ENCODE measurements at regions of chr17 and their contacts with region 1.

Region 1: DNA sequence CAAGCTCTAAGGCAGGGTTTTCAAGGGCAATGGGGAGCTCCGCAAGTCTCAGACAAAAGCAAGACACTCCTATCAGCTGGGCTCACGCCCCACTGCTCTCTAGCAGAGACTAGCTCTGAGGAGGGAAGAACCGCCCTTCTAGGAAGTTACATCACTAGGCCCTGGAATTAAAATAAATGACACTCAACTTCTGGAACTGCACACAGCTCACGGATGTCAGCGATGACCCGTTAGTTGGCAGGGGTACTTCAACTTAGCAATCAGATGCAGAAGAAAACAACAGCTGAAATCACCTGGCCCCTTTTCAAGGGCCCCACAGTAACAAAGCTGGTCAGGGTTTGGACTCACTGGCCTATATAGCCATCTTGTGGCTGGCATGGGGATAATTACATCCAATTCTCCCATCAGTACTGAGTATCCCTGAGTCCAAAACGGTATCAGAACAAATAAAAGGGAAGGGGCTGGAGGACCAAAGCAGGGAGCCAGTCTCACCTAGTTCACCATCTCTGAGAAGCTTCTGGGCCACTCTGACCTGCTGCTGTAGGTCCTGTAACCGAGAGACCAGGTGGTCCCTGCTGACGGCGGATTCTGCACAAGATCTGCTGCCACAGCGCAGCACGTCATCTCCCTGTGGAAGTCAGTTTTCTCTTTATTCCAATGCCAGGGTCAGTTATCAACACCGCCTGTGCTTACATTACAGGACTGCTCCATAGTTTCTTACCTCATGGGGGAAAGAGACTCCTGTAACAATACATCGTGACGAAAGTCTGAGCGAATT is 22.2 kb downstream of the SERPINF1 start:
- DNase-seq: no peak
- H3K4me3 Mint-ChIP-seq: no peak overlapping the region
- H3K27ac Mint-ChIP-seq: no peak overlapping the region
- H3K4me1 Mint-ChIP-seq: peaks cover 8% of the 10 kb centered on the region
- H3K27me3 Mint-ChIP-seq: no peaks in the 10 kb centered on the region
- CTCF ChIP-seq: no peak

Region 2: GRCh38 chr17:1648963-1649843 is 134.8 kb before region 1 on chr17:
- CTCF ChIA-PET with region 1: no interaction called
- intact Hi-C with region 1: no loop called
- DNase-seq: peak; percentile 88
- H3K4me3 Mint-ChIP-seq: peak overlapping the region; percentile 57
- H3K27ac Mint-ChIP-seq: no peak overlapping the region
- H3K4me1 Mint-ChIP-seq: no peaks in the 10 kb centered on the region
- H3K27me3 Mint-ChIP-seq: no peaks in the 10 kb centered on the region
- CTCF ChIP-seq: no peak

Region 3: DNA sequence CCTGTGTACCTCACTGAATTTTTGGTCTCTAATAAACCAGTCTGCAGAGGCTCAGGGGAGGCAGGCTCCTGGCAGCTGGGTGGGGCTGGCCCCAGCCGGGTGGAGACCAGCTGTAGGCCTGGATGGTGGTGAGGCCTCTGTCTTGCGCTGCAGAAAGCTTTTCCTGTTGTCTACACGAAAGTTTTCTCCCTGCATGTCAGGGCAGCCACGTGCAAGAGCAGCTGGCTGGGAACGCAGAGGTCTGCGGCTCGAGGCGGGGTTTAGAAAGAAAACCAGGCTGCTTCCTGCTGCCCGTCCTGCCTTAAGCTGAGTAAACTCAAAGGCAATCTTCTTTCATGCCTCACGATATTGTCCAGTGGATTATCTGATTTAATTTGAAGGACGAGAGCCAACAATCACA is 19.7 kb before region 1 on chr17:
- CTCF ChIA-PET with region 1: interaction called, 12 read pairs
- intact Hi-C with region 1: no loop called
- DNase-seq: no peak
- H3K4me3 Mint-ChIP-seq: no peak overlapping the region
- H3K27ac Mint-ChIP-seq: no peak overlapping the region
- H3K4me1 Mint-ChIP-seq: no peaks in the 10 kb centered on the region
- H3K27me3 Mint-ChIP-seq: no peaks in the 10 kb centered on the region
- CTCF ChIP-seq: no peak